ENCODE measurements at regions of chr6 and their contacts with region 1.

Region 1: DNA sequence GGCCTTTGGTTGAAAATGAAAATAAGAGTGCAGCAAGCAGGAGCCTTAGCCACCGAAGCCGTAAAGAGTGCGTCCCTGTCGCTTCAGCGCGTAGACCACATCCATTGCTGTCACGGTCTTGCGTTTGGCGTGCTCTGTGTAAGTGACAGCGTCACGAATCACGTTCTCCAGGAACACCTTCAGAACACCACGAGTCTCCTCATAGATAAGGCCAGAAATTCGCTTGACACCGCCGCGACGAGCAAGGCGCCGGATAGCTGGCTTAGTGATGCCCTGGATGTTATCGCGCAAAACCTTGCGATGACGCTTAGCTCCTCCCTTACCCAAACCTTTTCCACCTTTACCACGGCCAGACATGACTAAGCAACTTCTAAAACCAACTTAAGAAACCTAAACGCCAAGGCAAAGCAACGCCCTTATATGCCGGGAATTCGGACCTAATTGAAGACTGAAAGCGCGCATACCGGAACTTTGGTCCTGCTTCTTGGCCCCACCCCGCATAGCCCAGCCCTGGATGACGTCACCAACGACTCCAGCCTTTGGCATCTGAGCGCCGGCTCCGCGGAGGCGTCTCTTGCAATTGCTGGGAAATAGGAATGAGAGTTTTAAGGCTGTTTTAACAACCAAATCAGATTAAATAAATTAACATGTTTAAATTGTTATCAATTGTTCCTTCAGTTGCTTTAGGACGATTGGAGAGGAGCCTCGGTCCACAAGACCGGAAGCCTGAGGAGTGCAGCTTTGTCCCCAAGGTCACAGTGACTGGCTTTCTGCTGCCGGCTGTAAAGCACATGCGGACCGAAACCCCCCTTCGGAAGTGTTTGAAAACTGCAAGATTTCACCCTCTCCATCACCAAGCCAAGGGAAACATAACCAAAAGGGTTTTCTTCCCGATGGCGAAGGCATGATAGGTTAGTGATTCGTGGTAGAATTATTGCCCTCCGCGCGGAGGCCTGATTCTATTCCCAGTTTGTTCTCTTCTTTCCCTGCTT is 79.6 kb upstream of the BTN3A2 start:
- DNase-seq: peak; percentile 94 to 97
- ATAC-seq: peak; percentile 89 to 93 (median 92)
- H3K4me3 ChIP-seq: peak overlapping the region; percentile 83
- H3K27ac ChIP-seq: peak overlapping the region; percentile 94
- H3K4me1 ChIP-seq: peaks cover 23% of the 10 kb centered on the region
- H3K27me3 ChIP-seq: no peaks in the 10 kb centered on the region
- CTCF ChIP-seq: no peak

Region 2: GRCh38 chr6:26054857-26055669 is 230.4 kb before region 1 on chr6:
- intact Hi-C with region 1: loop called in 1 of 2 experiments (anchors 10 kb)
- DNase-seq: peak; percentile 80 to 86
- ATAC-seq: peak; percentile 73 to 81 (median 76)
- H3K4me3 ChIP-seq: peak overlapping the region; percentile 85
- H3K27ac ChIP-seq: peak overlapping the region; percentile 95
- H3K4me1 ChIP-seq: peaks cover 7% of the 10 kb centered on the region
- H3K27me3 ChIP-seq: no peaks in the 10 kb centered on the region
- CTCF ChIP-seq: no peak

Region 3: GRCh38 chr6:26122793-26123674 is 162.4 kb before region 1 on chr6:
- intact Hi-C with region 1: loop called in 1 of 2 experiments (anchors 2 kb)
- DNase-seq: peak; percentile 93 to 95
- ATAC-seq: peak; percentile 85 to 89 (median 88)
- H3K4me3 ChIP-seq: peak overlapping the region; percentile 87
- H3K27ac ChIP-seq: peak overlapping the region; percentile 97
- H3K4me1 ChIP-seq: peaks cover 17% of the 10 kb centered on the region
- H3K27me3 ChIP-seq: no peaks in the 10 kb centered on the region
- CTCF ChIP-seq: no peak

Region 4: GRCh38 chr6:26322645-26323482 is 37.4 kb after region 1 on chr6:
- intact Hi-C with region 1: loop called in 1 of 2 experiments (anchors 5 kb)
- DNase-seq: no peak
- ATAC-seq: peak; percentile 76 to 80 (median 79)
- H3K4me3 ChIP-seq: peak overlapping the region; percentile 74
- H3K27ac ChIP-seq: peak overlapping the region; percentile 69
- H3K4me1 ChIP-seq: no peaks in the 10 kb centered on the region
- H3K27me3 ChIP-seq: peaks cover 1 to 15% (median 2%) of the 10 kb centered on the region in 3 donors
- CTCF ChIP-seq: no peak